GM12878 (cell line): ENCODE measurements at regions of chr9 and their contacts with region 1.

Region 1: DNA sequence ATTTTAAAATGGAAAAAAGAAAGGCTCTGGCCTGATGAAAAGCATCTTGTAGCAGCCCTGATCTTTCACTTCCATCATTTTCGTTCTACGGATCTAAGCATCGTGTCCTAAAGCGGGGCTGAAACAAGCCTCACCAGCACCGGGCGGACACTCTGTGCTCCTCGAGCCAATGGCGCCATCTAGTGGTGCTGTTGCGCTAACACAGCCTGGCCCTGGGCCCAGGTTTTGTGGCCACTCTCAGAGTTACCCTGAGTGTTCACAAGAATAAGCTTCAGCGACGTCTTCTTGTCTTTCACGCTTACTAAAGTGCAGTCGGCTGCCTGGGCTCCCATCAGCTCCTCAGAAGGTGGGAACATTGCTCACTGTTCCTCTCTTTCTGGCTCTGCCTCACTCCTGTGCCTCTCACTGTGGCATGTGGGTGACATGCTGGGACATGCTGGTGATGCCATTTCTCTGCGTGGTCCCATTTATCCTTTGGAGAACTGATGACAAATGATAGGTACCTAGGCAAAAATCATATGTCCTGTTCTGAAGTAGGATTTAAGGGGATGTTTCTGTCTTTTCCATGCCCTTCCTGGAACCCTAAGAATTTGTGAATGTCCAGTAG is 32.7 kb downstream of the DMRT3 start:
- DNase-seq: no peak
- ATAC-seq: peak; percentile 98
- H3K4me3 ChIP-seq: no peak overlapping the region
- H3K27ac ChIP-seq: no peak overlapping the region
- H3K4me1 ChIP-seq: peaks cover 7% of the 10 kb centered on the region
- H3K27me3 ChIP-seq: no peaks in the 10 kb centered on the region
- CTCF ChIP-seq: peak; percentile 98
- EP300 ChIP-seq: no peak
- POLR2A ChIP-seq: no peak
- RAD21 ChIP-seq: peak; percentile 96

Region 2: GRCh38 chr9:613771-614347 is 395.3 kb before region 1 on chr9:
- CTCF ChIA-PET with region 1: interaction called, 15 read pairs
- POLR2A ChIA-PET with region 1: no interaction called
- RAD21 ChIA-PET with region 1: interaction called, 7 read pairs
- SMC1A ChIA-PET with region 1: interaction called, 29 read pairs
- in situ Hi-C with region 1: loop called (anchors 5 kb)
- intact Hi-C with region 1: loop called (anchors 1 kb)
- DNase-seq: peak; percentile 8
- ATAC-seq: peak; percentile 100
- H3K4me3 ChIP-seq: no peak overlapping the region
- H3K27ac ChIP-seq: no peak overlapping the region
- H3K4me1 ChIP-seq: no peaks in the 10 kb centered on the region
- H3K27me3 ChIP-seq: no peaks in the 10 kb centered on the region
- CTCF ChIP-seq: peak; percentile 72 to 80 (median 78)
- EP300 ChIP-seq: no peak
- POLR2A ChIP-seq: no peak
- RAD21 ChIP-seq: peak; percentile 68

Region 3: DNA sequence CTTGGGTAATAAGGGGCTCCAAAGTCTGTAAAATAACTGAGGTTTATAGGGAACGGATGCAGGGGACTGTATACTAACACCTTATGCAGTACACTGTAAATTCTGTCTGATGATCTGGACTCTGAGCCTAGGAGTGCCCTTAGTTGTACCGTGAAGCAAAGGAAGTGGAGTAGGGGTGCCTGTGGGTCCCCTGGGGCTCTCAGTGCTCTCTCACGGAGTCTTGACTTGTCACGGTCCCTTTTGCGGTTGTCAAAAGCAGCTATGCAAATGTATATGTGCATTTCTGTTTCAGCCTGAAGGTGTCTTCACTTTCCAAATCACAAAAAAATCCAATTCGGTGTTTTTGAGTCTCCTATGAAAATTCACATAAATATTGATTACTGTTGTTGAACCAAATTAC is 150.0 kb before region 1 on chr9:
- CTCF ChIA-PET with region 1: interaction called, 15 read pairs
- POLR2A ChIA-PET with region 1: no interaction called
- RAD21 ChIA-PET with region 1: interaction called, 4 read pairs
- SMC1A ChIA-PET with region 1: interaction called, 6 read pairs
- in situ Hi-C with region 1: no loop called
- intact Hi-C with region 1: no loop called
- DNase-seq: peak; percentile 69
- ATAC-seq: peak; percentile 99
- H3K4me3 ChIP-seq: no peak overlapping the region
- H3K27ac ChIP-seq: no peak overlapping the region
- H3K4me1 ChIP-seq: peaks cover 7% of the 10 kb centered on the region; the same call in 1 of the 2 replicates
- H3K27me3 ChIP-seq: no peaks in the 10 kb centered on the region
- CTCF ChIP-seq: no peak; a peak in 1 of 6 replicates
- EP300 ChIP-seq: peak; percentile 81 to 86; a peak in 3 of 4 replicates
- POLR2A ChIP-seq: no peak
- RAD21 ChIP-seq: no peak

Region 4: DNA sequence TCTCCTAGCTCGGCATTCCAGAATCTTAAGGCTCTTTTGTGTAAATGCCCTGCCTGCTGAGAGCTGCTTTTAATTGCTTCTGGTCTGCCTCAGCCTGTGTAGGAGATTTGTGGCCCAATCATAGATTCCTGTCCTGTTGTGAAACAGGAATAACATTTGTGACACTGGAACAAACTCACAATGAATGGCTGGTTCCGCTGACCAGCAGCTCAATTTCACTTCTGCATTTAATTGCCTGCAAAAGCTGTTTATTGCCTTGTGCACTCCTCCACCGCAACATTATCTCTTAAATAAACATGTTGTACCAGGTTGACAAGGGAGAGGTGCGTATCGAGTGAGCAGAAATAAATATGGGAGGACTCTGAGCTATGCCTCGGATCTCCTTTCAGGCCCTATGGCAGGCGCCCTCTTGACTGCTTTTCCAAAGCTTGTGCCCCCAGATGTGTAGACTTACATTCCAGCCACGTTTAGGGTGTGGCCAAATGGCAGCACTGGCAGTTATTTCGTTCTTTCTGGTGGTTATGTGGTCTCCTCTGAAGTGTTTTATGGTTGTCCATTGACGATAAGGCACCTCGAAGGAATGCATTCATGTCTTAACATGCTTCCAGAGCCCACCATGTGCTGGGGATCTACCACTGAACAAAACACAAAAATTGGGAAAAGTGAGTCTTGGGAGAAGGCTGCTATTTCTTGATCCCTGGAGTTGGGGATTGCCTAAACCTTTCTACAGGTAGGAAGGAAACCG is 109.6 kb before region 1 on chr9:
- CTCF ChIA-PET with region 1: interaction called, 153 read pairs
- POLR2A ChIA-PET with region 1: no interaction called
- RAD21 ChIA-PET with region 1: interaction called, 43 read pairs
- SMC1A ChIA-PET with region 1: interaction called, 92 read pairs
- in situ Hi-C with region 1: loop called (anchors 5 kb)
- intact Hi-C with region 1: no loop called
- DNase-seq: peak; percentile 36
- ATAC-seq: peak; percentile 74
- H3K4me3 ChIP-seq: no peak overlapping the region
- H3K27ac ChIP-seq: no peak overlapping the region
- H3K4me1 ChIP-seq: peaks cover 13% of the 10 kb centered on the region
- H3K27me3 ChIP-seq: no peaks in the 10 kb centered on the region
- CTCF ChIP-seq: no peak
- EP300 ChIP-seq: peak; percentile 50 to 84
- POLR2A ChIP-seq: no peak
- RAD21 ChIP-seq: no peak

Region 5: DNA sequence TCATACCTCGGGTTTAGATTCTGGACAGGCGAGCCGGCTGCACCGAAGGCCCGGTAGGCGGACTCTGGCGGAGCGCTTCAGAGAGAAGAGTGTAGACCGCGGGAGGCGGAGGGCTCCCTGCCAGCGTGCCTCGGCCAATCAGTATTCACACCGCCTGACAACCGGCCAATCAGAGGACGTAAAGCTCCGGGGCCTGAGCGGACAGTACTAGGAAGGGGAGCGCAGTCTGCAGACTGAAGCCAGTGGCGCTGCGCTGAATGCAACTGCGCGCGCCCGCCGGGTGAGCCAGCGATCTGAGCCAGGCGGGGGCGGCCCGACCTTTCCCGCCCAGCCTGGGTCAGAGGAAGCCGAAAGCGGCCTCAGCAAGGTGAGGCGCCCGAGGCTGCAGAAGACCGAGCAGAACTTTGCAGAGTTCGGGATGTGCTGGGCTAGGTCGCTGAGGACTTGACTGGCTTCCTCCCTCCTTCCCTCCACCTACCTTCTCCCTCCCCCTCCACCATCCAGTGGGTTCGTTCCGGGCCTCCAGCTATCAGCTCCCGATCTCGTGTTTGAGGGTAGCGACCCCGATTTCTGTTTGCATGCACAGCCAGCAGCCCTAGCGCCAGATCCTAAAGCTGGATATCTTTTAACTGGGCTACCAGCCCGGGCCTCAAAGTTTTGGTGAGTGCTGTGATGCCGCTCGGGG is 41.1 kb after region 1 on chr9 and contains the start of gene DMRT2:
- CTCF ChIA-PET with region 1: interaction called, 14 read pairs
- POLR2A ChIA-PET with region 1: interaction called, 3 read pairs
- RAD21 ChIA-PET with region 1: interaction called, 7 read pairs
- SMC1A ChIA-PET with region 1: interaction called, 7 read pairs
- in situ Hi-C with region 1: no loop called
- intact Hi-C with region 1: no loop called
- DNase-seq: no peak
- ATAC-seq: peak; percentile 78
- H3K4me3 ChIP-seq: no peak within 1 kb of the TSS
- H3K27ac ChIP-seq: no peak within 1 kb of the TSS
- H3K4me1 ChIP-seq: no peaks in the 10 kb centered on the region
- H3K27me3 ChIP-seq: peaks cover 10 to 38% of the 10 kb centered on the region in 2 experiments
- CTCF ChIP-seq: no peak
- EP300 ChIP-seq: no peak
- POLR2A ChIP-seq: no peak
- RAD21 ChIP-seq: no peak
- polyA plus RNA-seq, gene DMRT2: 0.08 to 0.18 TPM

Region 6: DNA sequence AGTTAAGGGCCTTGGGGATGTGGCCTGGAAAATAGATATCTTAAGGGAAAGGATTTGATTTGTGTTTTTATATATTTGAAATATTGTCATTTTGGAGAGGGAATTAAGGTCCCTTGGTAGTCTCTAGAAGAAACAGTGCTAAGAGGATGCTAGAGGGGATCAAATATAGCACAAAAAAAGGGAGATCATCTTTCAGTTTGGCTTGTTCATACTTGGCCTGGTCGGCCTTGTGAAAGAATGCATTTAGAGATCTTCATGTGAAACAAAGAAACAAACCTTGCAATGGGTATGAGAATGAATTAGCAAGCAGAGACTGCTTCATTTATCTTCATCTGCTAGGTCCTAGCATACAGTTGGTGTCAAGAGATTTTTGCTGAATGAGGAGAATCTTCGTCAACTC is 55.9 kb after region 1 on chr9:
- CTCF ChIA-PET with region 1: no interaction called
- POLR2A ChIA-PET with region 1: no interaction called
- RAD21 ChIA-PET with region 1: no interaction called
- SMC1A ChIA-PET with region 1: no interaction called
- in situ Hi-C with region 1: no loop called
- intact Hi-C with region 1: no loop called
- DNase-seq: no peak
- ATAC-seq: no peak
- H3K4me3 ChIP-seq: no peak overlapping the region
- H3K27ac ChIP-seq: no peak overlapping the region
- H3K4me1 ChIP-seq: no peaks in the 10 kb centered on the region
- H3K27me3 ChIP-seq: no peaks in the 10 kb centered on the region
- CTCF ChIP-seq: no peak
- EP300 ChIP-seq: no peak
- POLR2A ChIP-seq: no peak
- RAD21 ChIP-seq: no peak

Region 7: GRCh38 chr9:1337161-1337560 is 328.0 kb after region 1 on chr9:
- CTCF ChIA-PET with region 1: interaction called, 14 read pairs
- POLR2A ChIA-PET with region 1: no interaction called
- RAD21 ChIA-PET with region 1: interaction called, 6 read pairs
- SMC1A ChIA-PET with region 1: interaction called, 4 read pairs
- in situ Hi-C with region 1: no loop called
- intact Hi-C with region 1: no loop called
- DNase-seq: no peak
- ATAC-seq: peak; percentile 51
- H3K4me3 ChIP-seq: no peak overlapping the region
- H3K27ac ChIP-seq: no peak overlapping the region
- H3K4me1 ChIP-seq: no peaks in the 10 kb centered on the region
- H3K27me3 ChIP-seq: no peaks in the 10 kb centered on the region
- CTCF ChIP-seq: no peak; a peak in 1 of 6 replicates
- EP300 ChIP-seq: no peak
- POLR2A ChIP-seq: no peak
- RAD21 ChIP-seq: no peak

Region 8: DNA sequence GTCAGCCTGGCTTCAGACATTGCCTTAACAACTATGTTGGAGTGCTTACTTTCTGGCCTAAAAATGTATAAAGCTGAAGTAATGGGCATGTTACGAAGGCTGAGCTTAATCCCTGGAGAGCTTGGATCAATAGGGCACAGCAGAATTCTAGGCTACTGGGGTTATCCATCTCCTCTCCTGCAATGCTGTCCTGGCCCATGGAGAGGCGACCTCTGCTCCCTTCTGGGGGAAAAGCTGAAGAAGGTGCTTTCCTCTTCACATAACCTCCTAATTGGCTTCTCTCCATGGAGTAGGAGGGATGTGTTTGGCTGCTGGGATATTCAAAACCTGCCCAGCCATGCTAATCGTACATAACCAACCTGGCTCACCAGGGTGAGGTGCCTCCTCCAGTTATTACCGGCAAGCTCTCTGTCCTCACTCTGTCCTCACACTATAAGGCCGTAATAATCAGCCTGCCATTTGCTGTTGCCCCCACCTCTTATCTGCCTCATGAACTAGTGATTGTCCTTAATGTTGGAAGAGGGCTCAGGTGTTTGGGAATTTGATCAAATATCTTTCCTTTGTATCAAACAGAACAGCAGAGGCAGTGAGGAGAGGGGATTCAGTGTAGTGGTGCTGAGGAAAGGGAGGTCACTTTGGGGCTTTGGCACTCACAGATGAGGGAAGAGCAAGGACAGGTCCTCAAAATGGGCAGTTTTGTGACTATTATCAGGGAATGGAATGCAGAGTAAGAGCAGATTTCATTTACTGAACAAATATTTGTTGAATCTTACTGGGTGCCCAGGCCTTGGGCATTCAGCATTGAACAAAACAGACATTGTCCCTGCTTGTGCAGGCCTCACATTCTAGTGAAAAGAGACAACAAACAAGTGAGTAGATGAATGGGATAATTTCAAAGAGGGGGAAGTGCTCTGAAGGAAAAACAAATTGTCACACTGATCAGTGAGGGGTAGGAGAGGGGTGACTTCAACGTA is 444.7 kb after region 1 on chr9:
- CTCF ChIA-PET with region 1: interaction called, 4 read pairs
- POLR2A ChIA-PET with region 1: no interaction called
- RAD21 ChIA-PET with region 1: no interaction called
- SMC1A ChIA-PET with region 1: interaction called, 16 read pairs
- in situ Hi-C with region 1: no loop called
- intact Hi-C with region 1: no loop called
- DNase-seq: no peak
- ATAC-seq: no peak
- H3K4me3 ChIP-seq: no peak overlapping the region
- H3K27ac ChIP-seq: no peak overlapping the region
- H3K4me1 ChIP-seq: no peaks in the 10 kb centered on the region
- H3K27me3 ChIP-seq: peaks cover 0 to 2% of the 10 kb centered on the region in 2 experiments; a peak in 2 of 4 replicates
- CTCF ChIP-seq: no peak
- EP300 ChIP-seq: no peak
- POLR2A ChIP-seq: no peak
- RAD21 ChIP-seq: peak; percentile 14; the same call in 1 of the 2 replicates